ENCODE measurements at regions of chrX and their contacts with region 1.

Region 1: GRCh38 chrX:155216179-155216939 is at the start of gene VBP1:
- DNase-seq: peak; percentile 82 to 96
- H3K4me3 ChIP-seq: peak within 1 kb of the TSS; percentile 72 to 87
- H3K27ac ChIP-seq: peak within 1 kb of the TSS; percentile 90 to 92
- H3K4me1 ChIP-seq: peaks cover 0 to 3% of the 10 kb centered on the region in 2 donors
- H3K27me3 ChIP-seq: no peaks in the 10 kb centered on the region
- CTCF ChIP-seq: peak; percentile 13 to 51 (median 32)
- total RNA-seq, gene VBP1: 11.2 TPM

Region 2: GRCh38 chrX:155031657-155032056 is 184.7 kb before region 1 on chrX:
- intact Hi-C with region 1: no loop called
- DNase-seq: no peak
- H3K4me3 ChIP-seq: no peak overlapping the region
- H3K27ac ChIP-seq: no peak overlapping the region
- H3K4me1 ChIP-seq: no peaks in the 10 kb centered on the region
- H3K27me3 ChIP-seq: no peaks in the 10 kb centered on the region
- CTCF ChIP-seq: no peak

Region 3: GRCh38 chrX:155070975-155071693 is 145.2 kb before region 1 on chrX and contains the starts of genes BRCC3, CMC4 and MTCP1:
- intact Hi-C with region 1: loop called (anchors 5 kb)
- DNase-seq: peak; percentile 28 to 84
- H3K4me3 ChIP-seq: peak within 1 kb of the TSS; percentile 60 to 64
- H3K27ac ChIP-seq: peak within 1 kb of the TSS; percentile 88 to 93
- H3K4me1 ChIP-seq: no peaks in the 10 kb centered on the region
- H3K27me3 ChIP-seq: no peaks in the 10 kb centered on the region
- CTCF ChIP-seq: no peak
- total RNA-seq, gene BRCC3: 9.4 TPM
- total RNA-seq, gene CMC4: 11.9 TPM
- total RNA-seq, gene MTCP1: 6.1 TPM

Region 4: DNA sequence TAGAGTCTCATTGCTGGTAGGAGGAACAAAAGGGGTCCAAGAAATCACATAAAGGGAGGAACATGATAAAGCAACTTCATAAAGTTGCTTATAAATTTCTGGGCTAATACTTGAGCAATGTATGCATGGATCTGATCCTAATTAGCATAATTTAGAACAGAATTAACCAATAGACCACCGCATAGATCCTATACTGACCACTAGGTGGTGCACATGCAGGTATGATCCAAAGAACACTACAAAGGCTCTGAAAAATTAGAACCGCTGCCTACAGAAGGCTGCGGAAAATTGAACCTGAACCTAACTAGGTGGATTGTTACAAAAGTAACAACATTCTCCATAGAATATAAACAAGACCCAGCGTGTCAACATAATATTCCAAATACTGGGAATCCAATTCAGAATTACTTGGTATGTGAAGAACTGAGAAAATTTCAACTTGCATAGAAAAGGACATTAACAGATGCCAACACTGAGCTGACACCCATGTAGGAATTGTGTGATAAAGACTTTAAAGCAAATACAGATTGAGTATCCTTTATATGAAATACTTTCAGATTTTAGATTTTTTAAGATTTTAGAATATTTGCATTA is 121.8 kb before region 1 on chrX:
- intact Hi-C with region 1: loop called (anchors 10 kb)
- DNase-seq: no peak
- H3K4me3 ChIP-seq: no peak overlapping the region
- H3K27ac ChIP-seq: no peak overlapping the region
- H3K4me1 ChIP-seq: no peaks in the 10 kb centered on the region
- H3K27me3 ChIP-seq: no peaks in the 10 kb centered on the region
- CTCF ChIP-seq: peak; percentile 32 to 53 (median 40)

Region 5: GRCh38 chrX:155767051-155767875 is 550.9 kb after region 1 on chrX:
- intact Hi-C with region 1: loop called (anchors 5 kb)
- DNase-seq: peak in 1 of 2 donors; percentile 76
- H3K4me3 ChIP-seq: peak overlapping the region; percentile 46 to 66
- H3K27ac ChIP-seq: peak overlapping the region; percentile 36 to 71
- H3K4me1 ChIP-seq: no peaks in the 10 kb centered on the region
- H3K27me3 ChIP-seq: no peaks in the 10 kb centered on the region
- CTCF ChIP-seq: no peak

Region 6: DNA sequence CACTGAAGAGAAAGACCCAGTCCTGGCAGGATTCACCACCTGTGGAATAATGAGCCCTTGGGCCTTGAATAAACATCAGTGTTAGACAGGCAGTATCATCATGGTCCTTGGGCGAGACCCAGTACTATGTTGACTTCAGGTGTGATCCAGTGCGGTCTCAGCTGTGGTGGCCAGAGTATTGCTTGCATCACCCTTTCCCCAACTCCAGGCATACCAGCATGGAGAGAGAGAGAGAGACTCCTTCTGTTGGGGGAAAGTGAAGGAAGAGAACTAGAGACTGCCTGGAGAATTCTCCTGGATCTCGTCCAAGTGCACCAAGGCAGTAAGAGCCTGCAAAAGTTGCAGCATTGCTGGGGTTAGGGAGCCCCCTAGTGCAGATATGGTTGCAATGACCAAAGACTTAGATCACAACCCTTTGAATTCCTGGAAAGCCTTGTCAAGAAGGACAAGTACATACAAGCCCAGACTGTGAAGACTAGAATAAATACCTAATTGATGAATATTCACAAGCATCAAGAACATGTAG is 603.7 kb after region 1 on chrX:
- intact Hi-C with region 1: loop called (anchors 2 kb)
- DNase-seq: peak in 1 of 2 donors; percentile 68
- H3K4me3 ChIP-seq: no peak overlapping the region
- H3K27ac ChIP-seq: no peak overlapping the region
- H3K4me1 ChIP-seq: no peaks in the 10 kb centered on the region
- H3K27me3 ChIP-seq: no peaks in the 10 kb centered on the region
- CTCF ChIP-seq: peak; percentile 39 to 55 (median 51)

Region 7: DNA sequence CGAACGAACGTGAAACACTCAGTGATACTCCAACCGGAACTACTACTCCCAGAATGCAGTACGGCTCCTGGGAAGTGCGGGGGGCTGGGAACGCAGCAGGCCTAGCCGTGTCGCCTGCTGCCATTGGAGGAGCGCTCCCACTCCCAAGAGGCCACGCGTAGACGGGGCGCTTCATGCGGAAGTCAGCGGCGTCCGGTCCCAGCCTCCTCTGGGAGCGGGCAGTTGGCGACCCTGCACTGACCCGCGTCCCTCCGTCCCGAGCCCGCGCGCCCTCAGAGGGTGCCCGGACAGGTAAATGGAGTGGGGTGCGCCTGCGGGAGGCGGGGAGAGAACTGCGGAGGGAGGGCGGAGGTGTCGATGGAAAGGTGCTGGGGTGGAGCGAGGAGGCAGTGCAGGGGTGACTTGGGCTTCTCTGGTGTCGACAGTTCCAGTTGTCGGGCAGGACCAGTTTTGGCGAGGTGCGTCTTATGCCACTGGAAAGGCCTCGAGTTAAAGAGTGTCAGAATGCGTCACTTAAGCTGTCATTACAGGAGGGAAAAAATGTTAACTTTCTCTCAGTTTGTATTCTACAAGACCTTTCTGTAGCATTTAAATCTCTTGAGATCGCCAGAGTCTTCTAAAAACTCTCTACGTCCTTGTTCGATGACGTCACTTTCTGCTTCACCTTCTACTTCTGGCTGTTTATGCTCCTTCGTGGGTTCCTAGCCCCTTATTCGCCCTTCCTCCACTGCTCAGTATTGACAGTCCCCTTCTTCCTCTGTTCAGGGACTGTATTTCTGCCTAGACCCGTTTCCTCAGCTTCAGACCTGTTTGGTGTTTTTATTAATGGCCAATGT is 665.0 kb after region 1 on chrX and contains the start of gene VAMP7:
- intact Hi-C with region 1: loop called (anchors 5 kb)
- DNase-seq: peak; percentile 69 to 91
- H3K4me3 ChIP-seq: peak within 1 kb of the TSS; percentile 71 to 76
- H3K27ac ChIP-seq: peak within 1 kb of the TSS; percentile 76 to 82
- H3K4me1 ChIP-seq: no peaks in the 10 kb centered on the region
- H3K27me3 ChIP-seq: no peaks in the 10 kb centered on the region
- CTCF ChIP-seq: no peak
- total RNA-seq, gene VAMP7: 8.0 TPM